ENCODE measurements at regions of chr6 and their contacts with region 1.

Region 1: DNA sequence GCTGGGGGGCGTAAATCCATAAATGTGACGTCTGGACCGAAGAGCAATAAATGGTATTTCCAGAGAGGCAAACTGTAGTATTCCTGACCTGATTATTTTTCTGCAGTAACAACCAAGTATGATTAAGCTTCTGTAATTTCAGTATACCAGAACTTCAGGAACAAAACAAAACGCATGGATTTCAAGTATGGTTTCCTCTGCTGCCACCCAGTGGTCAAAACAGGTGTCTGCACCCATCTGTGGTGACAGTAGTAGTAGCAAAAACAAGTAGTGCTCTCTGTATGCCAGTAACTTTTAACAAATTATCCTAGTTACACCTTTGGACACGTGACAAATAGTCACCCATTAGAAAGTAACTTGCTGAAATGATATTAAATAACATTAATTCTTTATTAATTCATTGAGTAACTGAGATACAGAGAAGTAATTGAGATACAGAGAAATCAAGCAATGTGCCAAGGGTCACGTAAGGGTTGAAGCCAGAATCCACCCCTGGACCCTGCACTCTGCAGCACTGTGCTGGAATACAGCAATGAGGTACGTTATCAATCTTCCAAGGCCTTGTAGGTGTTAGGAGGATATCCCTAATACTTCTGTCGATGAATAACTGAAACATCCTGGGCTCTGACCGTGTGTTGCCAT is 7.9 kb downstream of the CALHM4 start:
- H3K4me3 Mint-ChIP-seq: no peak overlapping the region
- H3K27ac Mint-ChIP-seq: no peak overlapping the region
- H3K4me1 Mint-ChIP-seq: peaks cover 5% of the 10 kb centered on the region
- H3K27me3 Mint-ChIP-seq: peaks cover 13% of the 10 kb centered on the region

Region 2: DNA sequence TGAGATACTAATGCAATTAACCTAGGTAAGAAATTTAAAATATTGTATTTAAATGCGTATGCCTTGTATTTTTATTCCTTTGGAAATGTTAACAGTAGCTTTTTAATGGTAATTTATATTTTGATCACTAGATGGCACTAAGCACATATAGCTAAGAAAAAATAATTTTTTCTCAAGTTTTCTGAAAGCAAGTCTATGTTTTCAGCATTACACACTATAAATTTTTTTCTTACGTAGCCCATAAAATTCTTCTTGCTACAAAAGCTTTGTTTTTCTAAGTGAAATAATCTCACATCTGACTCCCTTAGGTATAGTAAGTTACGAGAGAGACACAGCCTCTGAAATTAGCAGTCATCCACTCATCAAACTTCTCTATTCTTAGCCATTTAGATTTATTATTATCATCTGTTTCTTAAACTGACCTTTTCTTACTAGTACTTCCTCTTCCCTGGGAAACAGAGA is 343.3 kb before region 1 on chr6:
- intact Hi-C with region 1: loop called (anchors 2 kb)
- H3K4me3 Mint-ChIP-seq: no peak overlapping the region
- H3K27ac Mint-ChIP-seq: no peak overlapping the region
- H3K4me1 Mint-ChIP-seq: peaks cover 5% of the 10 kb centered on the region
- H3K27me3 Mint-ChIP-seq: no peaks in the 10 kb centered on the region

Region 3: DNA sequence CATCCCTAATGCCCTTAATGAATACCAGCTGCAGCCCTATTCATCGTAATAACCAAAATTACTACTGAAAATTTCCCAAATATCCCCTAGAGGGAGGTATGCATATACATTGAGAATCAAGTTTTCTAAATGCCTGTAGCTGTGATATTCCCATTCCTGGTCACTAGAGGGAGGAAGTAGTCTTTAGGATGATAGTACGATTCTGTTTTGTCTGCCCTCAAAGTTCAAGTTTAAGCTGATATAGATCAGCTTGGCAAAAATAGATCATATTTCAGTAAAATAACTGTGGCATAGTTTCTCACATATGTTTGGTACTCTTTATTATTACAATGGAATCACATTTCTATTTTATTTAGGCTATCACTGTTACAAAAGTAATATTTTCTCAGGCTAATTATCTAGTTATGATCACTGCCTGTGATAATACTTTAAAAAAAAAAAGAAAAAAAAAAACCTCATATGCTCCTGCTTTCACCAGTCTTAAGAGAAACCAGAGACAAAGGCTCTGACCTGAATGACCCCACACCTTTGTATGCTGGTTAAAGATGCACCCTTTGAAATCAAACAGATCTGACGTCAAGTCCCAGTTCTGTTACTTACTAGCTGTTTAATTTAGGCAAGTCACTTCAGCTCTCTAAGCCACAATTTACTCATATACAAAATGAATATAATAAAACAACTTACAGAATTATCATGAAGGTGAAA is 292.8 kb before region 1 on chr6:
- intact Hi-C with region 1: loop called (anchors 1 kb)
- H3K4me3 Mint-ChIP-seq: no peak overlapping the region
- H3K27ac Mint-ChIP-seq: no peak overlapping the region
- H3K4me1 Mint-ChIP-seq: no peaks in the 10 kb centered on the region
- H3K27me3 Mint-ChIP-seq: no peaks in the 10 kb centered on the region

Measured in dendritic cell treated with granulocyte-macrophage colony-stimulating factor and Interleukin-4, amounts not matched to agents 40 ng/mL and 50 ng/mL, for 4 days (primary cell).